ENCODE measurements at regions of chr19 and their contacts with region 1.

Region 1: DNA sequence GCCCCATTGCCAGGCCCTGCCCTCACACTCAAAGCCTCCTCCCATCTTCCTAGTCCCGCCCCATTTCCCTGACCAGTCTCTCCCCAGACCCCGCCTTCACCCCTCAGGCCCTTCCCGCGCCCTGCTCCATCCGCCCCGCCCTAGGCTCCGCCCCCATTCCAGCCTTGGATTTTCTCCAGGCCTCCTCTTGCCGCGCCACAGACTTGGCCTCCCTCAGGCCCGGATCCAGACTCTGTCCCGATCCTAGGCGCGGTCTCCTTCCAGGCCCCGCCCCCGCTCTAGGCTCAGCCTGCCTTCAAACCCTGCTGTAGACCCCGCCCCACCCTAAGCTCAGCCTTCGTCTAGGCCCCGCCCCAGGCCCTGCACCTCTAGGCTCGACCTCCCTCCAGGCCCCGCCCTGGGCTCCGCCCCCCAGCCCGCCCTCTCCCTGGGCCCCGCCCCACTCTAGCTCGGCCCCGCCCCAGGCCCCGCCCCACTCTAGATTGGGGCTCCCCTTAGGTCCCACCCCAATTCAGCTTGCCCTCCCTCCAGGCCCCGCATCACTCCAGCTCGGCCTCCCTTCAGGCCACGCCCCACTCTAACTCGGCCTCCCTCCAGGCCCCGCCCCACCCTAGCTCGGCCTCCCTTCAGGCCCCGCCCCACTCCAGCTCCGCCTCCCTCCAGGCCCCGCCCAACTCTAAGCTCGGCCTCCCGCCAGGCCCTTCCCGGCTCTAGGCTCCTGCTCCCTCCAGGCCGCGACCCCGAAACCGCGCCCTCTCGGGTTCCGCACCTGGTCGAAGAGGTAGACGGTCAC is 18.5 kb downstream of the LMTK3 start:
- DNase-seq: peak; percentile 71
- ATAC-seq: peak; percentile 69
- H3K4me3 Mint-ChIP-seq: peak overlapping the region; percentile 74
- H3K27ac Mint-ChIP-seq: no peak overlapping the region
- H3K4me1 Mint-ChIP-seq: peaks cover 42% of the 10 kb centered on the region
- H3K27me3 Mint-ChIP-seq: peaks cover 33% of the 10 kb centered on the region
- CTCF ChIP-seq: no peak

Region 2: GRCh38 chr19:48372904-48373303 is 120.2 kb before region 1 on chr19:
- CTCF ChIA-PET with region 1: no interaction called
- POLR2A ChIA-PET with region 1: interaction called, 11 read pairs
- intact Hi-C with region 1: no loop called
- DNase-seq: no peak
- ATAC-seq: no peak
- H3K4me3 Mint-ChIP-seq: no peak overlapping the region
- H3K27ac Mint-ChIP-seq: no peak overlapping the region
- H3K4me1 Mint-ChIP-seq: no peaks in the 10 kb centered on the region
- H3K27me3 Mint-ChIP-seq: peaks cover 2% of the 10 kb centered on the region
- CTCF ChIP-seq: no peak

Region 3: DNA sequence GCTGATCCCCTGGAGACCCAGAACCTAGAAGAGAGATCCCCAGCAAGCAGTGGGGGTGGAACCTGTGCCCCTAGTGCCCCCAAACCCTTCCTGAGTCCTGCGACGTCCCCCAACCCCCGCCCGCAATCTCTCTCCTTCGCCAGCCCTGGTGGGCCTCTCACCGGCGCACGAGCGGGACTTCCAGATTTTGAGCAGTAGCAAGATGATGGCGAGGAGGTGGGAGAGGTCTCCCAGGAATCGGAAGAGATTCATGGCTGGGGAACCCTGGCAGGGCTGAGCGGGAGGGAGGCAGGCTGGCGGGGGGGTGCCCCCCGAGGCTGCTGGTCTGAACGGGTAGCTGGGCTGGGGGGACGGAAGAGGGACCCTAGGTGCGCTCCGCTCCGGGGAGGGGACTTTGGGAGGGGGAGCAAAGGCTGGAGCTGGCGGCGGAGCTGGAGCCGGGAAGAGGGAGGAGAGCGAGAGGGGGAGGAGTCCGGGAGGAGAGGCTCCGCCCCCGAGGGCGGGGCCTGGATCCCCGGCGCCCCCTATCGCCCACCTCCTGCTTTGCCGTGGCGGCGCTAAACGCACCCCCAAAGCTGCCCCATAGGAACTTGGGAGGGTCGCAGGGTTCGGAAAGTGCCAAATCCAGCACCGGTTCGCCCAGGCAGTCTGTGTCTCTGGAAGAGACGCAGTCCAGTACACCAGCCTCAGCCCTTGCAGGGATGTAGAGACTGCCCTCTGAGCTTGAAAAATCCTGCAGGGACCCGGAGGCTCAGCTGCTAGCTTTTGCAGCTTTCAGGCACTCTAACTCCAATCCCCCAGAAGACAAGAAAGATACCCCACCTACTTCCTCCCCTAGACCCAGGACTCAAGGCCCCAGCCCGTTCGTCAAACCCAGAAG is 101.8 kb before region 1 on chr19 and contains the start of gene KDELR1:
- CTCF ChIA-PET with region 1: interaction called, 10 read pairs
- POLR2A ChIA-PET with region 1: interaction called, 4 read pairs
- intact Hi-C with region 1: loop called (anchors 2 kb)
- DNase-seq: peak; percentile 83
- ATAC-seq: peak; percentile 84
- H3K4me3 Mint-ChIP-seq: peak within 1 kb of the TSS; percentile 96
- H3K27ac Mint-ChIP-seq: peak within 1 kb of the TSS; percentile 88
- H3K4me1 Mint-ChIP-seq: peaks cover 35% of the 10 kb centered on the region
- H3K27me3 Mint-ChIP-seq: peaks cover 19% of the 10 kb centered on the region
- CTCF ChIP-seq: peak; percentile 51
- total RNA-seq, gene KDELR1: 50.8 and 51.9 TPM in 2 replicates

Region 4: DNA sequence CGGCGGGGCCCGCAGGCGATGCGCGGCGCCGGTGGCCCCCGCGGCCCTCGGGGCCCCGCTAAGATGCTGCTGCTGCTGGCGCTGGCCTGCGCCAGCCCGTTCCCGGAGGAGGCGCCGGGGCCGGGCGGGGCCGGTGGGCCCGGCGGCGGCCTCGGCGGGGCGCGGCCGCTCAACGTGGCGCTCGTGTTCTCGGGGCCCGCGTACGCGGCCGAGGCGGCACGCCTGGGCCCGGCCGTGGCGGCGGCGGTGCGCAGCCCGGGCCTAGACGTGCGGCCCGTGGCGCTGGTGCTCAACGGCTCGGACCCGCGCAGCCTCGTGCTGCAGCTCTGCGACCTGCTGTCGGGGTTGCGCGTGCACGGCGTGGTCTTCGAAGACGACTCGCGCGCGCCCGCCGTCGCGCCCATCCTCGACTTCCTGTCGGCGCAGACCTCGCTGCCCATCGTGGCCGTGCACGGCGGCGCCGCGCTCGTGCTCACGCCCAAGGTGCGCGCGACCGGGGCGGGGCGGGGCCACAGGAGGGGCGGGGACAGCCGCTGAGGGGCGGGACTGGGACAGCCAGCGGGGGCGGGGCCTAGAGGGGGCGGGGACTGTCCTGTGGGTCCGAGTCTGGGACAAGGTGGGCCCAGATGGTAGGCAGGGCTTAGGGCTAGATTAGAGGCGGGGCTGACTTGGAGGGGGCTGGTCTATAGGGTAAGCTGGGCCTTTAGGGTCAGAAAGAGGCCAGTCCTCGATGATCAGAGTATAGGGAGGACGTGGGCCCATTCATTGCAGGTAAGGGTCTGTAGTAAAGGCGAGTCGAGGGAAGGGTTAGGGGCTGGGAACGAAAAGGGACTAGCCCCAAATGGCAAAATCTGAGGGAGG is 94.5 kb before region 1 on chr19:
- CTCF ChIA-PET with region 1: interaction called, 3 read pairs
- POLR2A ChIA-PET with region 1: interaction called, 6 read pairs
- intact Hi-C with region 1: loop called (anchors 2 kb)
- DNase-seq: peak; percentile 80
- ATAC-seq: peak; percentile 72
- H3K4me3 Mint-ChIP-seq: peak overlapping the region; percentile 66
- H3K27ac Mint-ChIP-seq: no peak overlapping the region
- H3K4me1 Mint-ChIP-seq: peaks cover 46% of the 10 kb centered on the region
- H3K27me3 Mint-ChIP-seq: peaks cover 26% of the 10 kb centered on the region
- CTCF ChIP-seq: no peak

Region 5: GRCh38 chr19:48468775-48469288 is 24.3 kb before region 1 on chr19:
- CTCF ChIA-PET with region 1: interaction called, 9 read pairs
- POLR2A ChIA-PET with region 1: interaction called, 6 read pairs
- intact Hi-C with region 1: loop called (anchors 1 kb)
- DNase-seq: peak; percentile 95
- ATAC-seq: peak; percentile 88
- H3K4me3 Mint-ChIP-seq: peak overlapping the region; percentile 90
- H3K27ac Mint-ChIP-seq: peak overlapping the region; percentile 94
- H3K4me1 Mint-ChIP-seq: peaks cover 27% of the 10 kb centered on the region
- H3K27me3 Mint-ChIP-seq: no peaks in the 10 kb centered on the region
- CTCF ChIP-seq: no peak

Region 6: GRCh38 chr19:48480558-48481500 is 12.3 kb before region 1 on chr19:
- CTCF ChIA-PET with region 1: interaction called, 14 read pairs
- POLR2A ChIA-PET with region 1: interaction called, 4 read pairs
- intact Hi-C with region 1: no loop called
- DNase-seq: no peak
- ATAC-seq: peak; percentile 73
- H3K4me3 Mint-ChIP-seq: peak overlapping the region; percentile 84
- H3K27ac Mint-ChIP-seq: no peak overlapping the region
- H3K4me1 Mint-ChIP-seq: peaks cover 11% of the 10 kb centered on the region
- H3K27me3 Mint-ChIP-seq: peaks cover 1% of the 10 kb centered on the region
- CTCF ChIP-seq: no peak

Region 7: GRCh38 chr19:48602117-48602739 is 109.1 kb after region 1 on chr19:
- CTCF ChIA-PET with region 1: no interaction called
- POLR2A ChIA-PET with region 1: no interaction called
- intact Hi-C with region 1: no loop called
- DNase-seq: no peak
- ATAC-seq: no peak
- H3K4me3 Mint-ChIP-seq: no peak overlapping the region
- H3K27ac Mint-ChIP-seq: no peak overlapping the region
- H3K4me1 Mint-ChIP-seq: no peaks in the 10 kb centered on the region
- H3K27me3 Mint-ChIP-seq: no peaks in the 10 kb centered on the region
- CTCF ChIP-seq: no peak